Calu3 (cell line): ENCODE measurements at regions of chr2 and their contacts with region 1.

Region 1: GRCh38 chr2:95207111-95207961 is at the start of gene ZNF892:
- DNase-seq: peak; percentile 95
- H3K4me3 Mint-ChIP-seq: peak within 1 kb of the TSS; percentile 90
- H3K27ac Mint-ChIP-seq: peak within 1 kb of the TSS; percentile 64
- H3K4me1 Mint-ChIP-seq: no peaks in the 10 kb centered on the region
- H3K27me3 Mint-ChIP-seq: no peaks in the 10 kb centered on the region
- CTCF ChIP-seq: no peak
- total RNA-seq, gene ZNF892: 6.2 and 6.6 TPM in 2 replicates

Region 2: GRCh38 chr2:94923196-94923595 is 284.1 kb before region 1 on chr2:
- CTCF ChIA-PET with region 1: no interaction called
- intact Hi-C with region 1: no loop called
- DNase-seq: no peak
- H3K4me3 Mint-ChIP-seq: no peak overlapping the region
- H3K27ac Mint-ChIP-seq: no peak overlapping the region
- H3K4me1 Mint-ChIP-seq: no peaks in the 10 kb centered on the region
- H3K27me3 Mint-ChIP-seq: peaks cover 57% of the 10 kb centered on the region
- CTCF ChIP-seq: no peak

Region 3: DNA sequence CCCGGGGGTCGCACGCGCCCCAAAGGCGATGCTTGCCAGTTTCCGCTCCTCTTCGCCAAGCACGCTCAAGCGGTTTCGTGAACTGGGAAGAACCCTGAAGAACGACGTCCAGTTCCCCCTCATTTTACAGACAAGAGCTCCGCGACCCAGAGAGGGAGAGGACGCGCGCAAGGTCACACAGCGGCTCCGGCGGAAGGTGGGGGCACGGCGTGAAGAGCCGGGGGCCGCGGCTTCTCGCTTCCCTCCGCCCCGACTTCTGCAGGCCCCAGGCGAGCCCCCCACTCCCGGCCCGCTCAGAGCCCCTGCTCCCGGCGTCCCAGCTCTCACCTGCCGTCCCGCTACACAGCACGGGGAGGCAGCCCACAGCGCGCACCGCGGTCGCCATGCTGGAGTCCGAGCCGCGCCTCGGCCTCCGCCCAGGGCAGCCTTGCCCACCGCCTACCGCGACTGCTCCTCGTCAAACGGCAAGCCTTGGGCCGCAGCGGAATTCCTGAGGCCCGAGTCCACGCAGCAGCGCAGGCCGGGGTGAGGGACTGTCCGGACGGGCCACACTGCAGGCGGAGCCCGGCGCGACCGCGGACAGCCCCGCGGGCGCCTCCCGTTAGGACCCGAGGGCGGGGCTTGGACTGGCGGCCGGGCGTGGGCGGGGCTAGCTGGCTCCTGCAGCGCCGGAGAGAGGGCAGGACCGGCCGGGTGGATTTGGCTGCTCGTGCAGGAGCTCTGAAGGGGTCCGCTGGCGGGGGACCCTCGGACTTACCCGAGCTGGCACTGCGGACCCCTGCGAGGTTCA is 85.7 kb before region 1 on chr2 and contains the start of gene MRPS5:
- CTCF ChIA-PET with region 1: no interaction called
- intact Hi-C with region 1: loop called (anchors 5 kb)
- DNase-seq: peak; percentile 93
- H3K4me3 Mint-ChIP-seq: peak within 1 kb of the TSS; percentile 85
- H3K27ac Mint-ChIP-seq: peak within 1 kb of the TSS; percentile 91
- H3K4me1 Mint-ChIP-seq: peaks cover 17% of the 10 kb centered on the region
- H3K27me3 Mint-ChIP-seq: no peaks in the 10 kb centered on the region
- CTCF ChIP-seq: no peak
- total RNA-seq, gene MRPS5: 67.9 and 71.5 TPM in 2 replicates

Region 4: GRCh38 chr2:95165129-95166064 is 41.9 kb before region 1 on chr2 and contains the start of gene ZNF2:
- CTCF ChIA-PET with region 1: no interaction called
- intact Hi-C with region 1: no loop called
- DNase-seq: peak; percentile 95
- H3K4me3 Mint-ChIP-seq: peak within 1 kb of the TSS; percentile 93
- H3K27ac Mint-ChIP-seq: peak within 1 kb of the TSS; percentile 95
- H3K4me1 Mint-ChIP-seq: peaks cover 21% of the 10 kb centered on the region
- H3K27me3 Mint-ChIP-seq: no peaks in the 10 kb centered on the region
- CTCF ChIP-seq: no peak
- total RNA-seq, gene ZNF2: 3.5 and 4.8 TPM in 2 replicates

Region 5: DNA sequence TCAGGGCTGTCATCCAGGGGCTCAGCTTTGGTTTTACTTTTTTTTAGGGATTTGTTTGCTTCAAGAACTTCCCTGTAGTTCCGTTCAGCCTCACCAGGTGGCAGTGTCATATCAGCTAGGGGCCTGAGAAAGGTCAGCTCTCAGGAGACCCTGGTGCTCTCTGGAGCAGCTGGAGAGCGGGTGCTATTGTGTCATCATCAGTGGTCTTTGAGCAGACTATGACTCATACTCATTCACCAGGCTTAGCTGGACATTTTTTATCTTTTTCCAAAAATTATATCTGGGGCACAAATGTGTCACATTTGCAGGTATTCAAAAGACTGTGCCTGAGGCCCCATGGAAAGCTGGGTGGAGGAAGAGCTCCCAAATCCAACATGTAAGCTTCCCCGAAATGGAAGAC is 24.4 kb after region 1 on chr2:
- CTCF ChIA-PET with region 1: no interaction called
- intact Hi-C with region 1: no loop called
- DNase-seq: peak; percentile 75
- H3K4me3 Mint-ChIP-seq: no peak overlapping the region
- H3K27ac Mint-ChIP-seq: no peak overlapping the region
- H3K4me1 Mint-ChIP-seq: no peaks in the 10 kb centered on the region
- H3K27me3 Mint-ChIP-seq: no peaks in the 10 kb centered on the region
- CTCF ChIP-seq: peak; percentile 88

Region 6: DNA sequence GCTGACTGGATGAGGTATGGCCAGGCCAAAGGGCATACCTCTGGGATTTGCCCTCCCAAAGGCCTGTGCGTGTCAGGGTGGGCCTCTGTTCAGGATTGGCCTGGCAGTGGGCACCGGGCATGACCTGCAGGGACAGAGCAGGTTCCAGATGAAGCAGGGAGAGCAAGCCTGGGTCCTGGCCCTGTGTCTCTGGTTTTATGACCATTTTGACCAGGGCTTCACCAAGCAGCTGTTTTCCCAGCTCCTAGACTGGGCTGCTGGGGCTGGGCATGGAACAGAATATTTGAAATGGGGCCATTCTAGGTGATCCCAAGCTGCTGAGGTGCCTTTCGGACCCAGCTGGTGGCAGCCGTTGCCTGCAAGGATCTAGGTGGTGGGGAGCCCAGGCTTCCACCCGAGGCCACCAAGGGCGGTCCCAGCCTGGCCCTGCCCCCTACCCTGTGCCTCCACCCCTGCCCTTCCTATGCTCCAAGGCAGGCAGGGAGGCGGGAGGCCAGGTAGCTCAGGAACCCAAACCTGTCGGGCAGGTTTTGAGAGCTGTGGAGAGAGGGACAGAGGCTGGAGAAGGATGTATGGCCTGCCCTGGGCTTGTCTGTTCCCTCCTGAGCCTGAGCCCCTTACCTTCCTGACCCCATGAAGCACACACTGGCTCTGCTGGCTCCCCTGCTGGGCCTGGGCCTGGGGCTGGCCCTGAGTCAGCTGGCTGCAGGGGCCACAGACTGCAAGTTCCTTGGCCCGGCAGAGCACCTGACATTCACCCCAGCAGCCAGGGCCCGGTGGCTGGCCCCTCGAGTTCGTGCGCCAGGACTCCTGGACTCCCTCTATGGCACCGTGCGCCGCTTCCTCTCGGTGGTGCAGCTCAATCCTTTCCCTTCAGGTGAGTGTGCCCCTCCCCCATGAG is 66.9 kb after region 1 on chr2 and contains the start of gene PROM2:
- CTCF ChIA-PET with region 1: no interaction called
- intact Hi-C with region 1: loop called (anchors 2 kb)
- DNase-seq: peak; percentile 86
- H3K4me3 Mint-ChIP-seq: peak within 1 kb of the TSS; percentile 77
- H3K27ac Mint-ChIP-seq: peak within 1 kb of the TSS; percentile 85
- H3K4me1 Mint-ChIP-seq: peaks cover 16% of the 10 kb centered on the region
- H3K27me3 Mint-ChIP-seq: no peaks in the 10 kb centered on the region
- CTCF ChIP-seq: no peak
- total RNA-seq, gene PROM2: 24.7 and 29.9 TPM in 2 replicates